ENCODE measurements at regions of chr3 and their contacts with region 1.

Region 1: DNA sequence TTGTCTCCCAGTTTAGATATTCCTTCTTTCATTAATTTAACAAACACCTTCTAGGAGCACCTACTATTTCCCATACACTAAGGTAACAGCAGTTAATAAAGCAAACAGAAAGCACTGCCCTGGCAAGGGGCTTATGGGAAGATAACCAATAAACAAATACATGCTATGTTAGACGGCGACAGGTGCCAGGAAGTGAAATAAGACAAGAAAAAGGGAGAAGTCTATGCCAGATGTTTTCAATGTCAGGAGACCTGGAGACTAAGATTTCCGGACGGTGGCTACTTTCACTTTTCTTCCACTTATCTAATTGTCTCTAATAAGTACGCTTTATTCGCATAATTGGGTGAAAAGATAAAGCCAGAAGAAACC is 32.5 kb upstream of the ZNF445 start:
- DNase-seq: no peak
- ATAC-seq: peak in 1 of 4 donors; percentile 5
- H3K4me3 ChIP-seq: peak overlapping the region; percentile 74 to 99 (median 92)
- H3K27ac ChIP-seq: peak overlapping the region; percentile 49 to 94 (median 89)
- H3K4me1 ChIP-seq: peaks cover 0 to 29% (median 14%) of the 10 kb centered on the region in 12 donors
- H3K27me3 ChIP-seq: no peaks in the 10 kb centered on the region
- CTCF ChIP-seq: no peak
- POLR2A ChIP-seq: no peak

Region 2: DNA sequence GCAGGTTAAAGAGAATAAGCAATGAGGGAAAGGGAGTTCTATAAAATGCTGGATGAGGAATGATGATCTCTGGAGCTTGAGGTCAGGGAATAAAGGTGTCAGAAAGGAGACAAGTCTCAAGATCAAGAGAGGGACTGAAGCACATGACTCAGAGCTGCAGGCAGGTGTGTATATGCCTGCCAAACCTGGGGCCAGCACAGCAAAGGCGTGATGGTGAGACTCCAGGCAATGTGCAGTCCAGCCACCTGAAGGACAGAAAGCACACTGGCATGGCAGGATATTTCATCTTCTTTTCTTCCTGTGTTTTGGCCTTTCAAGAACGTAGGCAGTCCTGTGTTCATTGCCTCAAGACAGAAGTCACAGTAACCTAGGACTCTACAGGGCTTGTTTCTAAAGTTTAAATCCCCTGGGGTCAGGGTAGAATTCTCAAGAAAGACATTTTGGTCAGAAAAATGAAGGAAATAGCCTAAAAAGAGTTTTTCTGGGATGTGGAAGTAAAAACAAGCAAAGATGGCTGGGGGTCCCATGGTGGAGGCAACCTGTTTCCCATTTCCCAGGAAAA is 323.8 kb before region 1 on chr3:
- intact Hi-C with region 1: no loop called
- DNase-seq: no peak
- ATAC-seq: no peak
- H3K4me3 ChIP-seq: no peak overlapping the region
- H3K27ac ChIP-seq: no peak overlapping the region
- H3K4me1 ChIP-seq: no peaks in the 10 kb centered on the region
- H3K27me3 ChIP-seq: peaks cover 0 to 40% (median 0%) of the 10 kb centered on the region in 9 donors
- CTCF ChIP-seq: no peak
- POLR2A ChIP-seq: no peak

Region 3: DNA sequence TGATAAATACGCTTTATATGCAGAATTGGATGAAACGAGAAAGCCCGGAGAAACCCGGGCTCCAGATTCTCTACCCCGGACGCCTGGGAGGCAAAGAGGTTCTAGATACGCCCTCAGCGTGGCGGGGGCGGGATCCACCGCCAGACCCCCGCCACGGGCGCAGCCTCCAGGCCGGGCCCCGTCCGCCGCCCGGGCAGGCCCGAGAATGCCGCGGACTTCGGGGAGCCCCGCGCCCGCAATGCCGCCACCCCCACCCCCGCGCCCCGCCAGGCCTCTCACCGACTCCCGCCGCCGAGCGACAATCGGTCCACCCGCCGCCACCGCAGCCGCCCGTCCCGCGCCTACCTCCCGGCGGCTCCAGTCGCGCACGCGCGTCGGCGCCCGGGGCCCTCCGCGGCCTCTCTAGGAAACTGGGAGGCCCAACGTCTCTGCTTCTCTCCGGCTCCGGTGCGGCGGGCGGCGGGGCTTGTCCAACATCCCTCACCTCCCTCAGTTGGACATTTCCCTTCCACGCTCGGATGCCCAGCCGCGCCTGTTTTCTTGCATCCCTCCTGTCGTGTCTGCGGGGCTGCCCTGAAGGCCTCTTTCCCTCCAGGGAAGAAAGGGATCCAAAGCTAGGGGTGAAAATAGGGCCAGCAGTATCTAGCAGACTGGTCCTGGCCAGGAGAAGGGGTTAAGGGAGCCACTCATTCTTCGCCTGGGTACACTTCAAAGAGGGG is 32.5 kb before region 1 on chr3 and contains the start of gene ZNF445:
- intact Hi-C with region 1: loop called in 1 of 10 experiments (anchors 2 kb)
- DNase-seq: peak; percentile 79 to 91 (median 85)
- ATAC-seq: peak; percentile 69 to 99 (median 98)
- H3K4me3 ChIP-seq: peak within 1 kb of the TSS; percentile 58 to 96 (median 76)
- H3K27ac ChIP-seq: peak within 1 kb of the TSS; percentile 37 to 87 (median 66)
- H3K4me1 ChIP-seq: peaks cover 0 to 23% (median 18%) of the 10 kb centered on the region in 12 donors
- H3K27me3 ChIP-seq: no peaks in the 10 kb centered on the region
- CTCF ChIP-seq: no peak
- POLR2A ChIP-seq: peak in 1 of 2 donors; percentile 39
- total RNA-seq, gene ZNF445: 5.7 to 19.9 (median 12.3) TPM

Measured in heart left ventricle (tissue), 16 donors.